ENCODE measurements at regions of chr2 and their contacts with region 1.

Region 1: DNA sequence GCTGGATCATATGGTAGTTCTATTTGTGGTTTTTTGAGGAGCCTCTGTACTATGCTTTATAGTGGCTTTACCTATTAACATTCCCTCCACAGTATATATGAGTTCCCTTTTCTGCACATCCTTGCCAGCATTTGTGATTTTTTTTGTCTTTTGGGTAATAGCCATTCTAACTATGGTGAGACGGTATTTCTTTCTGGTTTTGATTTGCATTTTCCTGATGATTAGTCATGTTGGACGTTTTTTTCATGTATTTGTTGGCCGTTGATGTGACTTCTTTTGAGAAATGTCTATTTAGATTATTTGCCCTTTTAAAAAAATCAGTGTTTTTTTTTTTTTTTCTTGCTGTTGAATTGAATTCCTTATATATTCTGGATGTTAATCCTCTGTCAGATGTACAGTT is 31.1 kb downstream of the ACTR3 start:
- DNase-seq: no peak
- ATAC-seq: no peak
- H3K4me3 ChIP-seq: no peak overlapping the region
- H3K27ac ChIP-seq: no peak overlapping the region
- H3K4me1 ChIP-seq: no peaks in the 10 kb centered on the region
- H3K27me3 ChIP-seq: no peaks in the 10 kb centered on the region
- CTCF ChIP-seq: no peak
- EP300 ChIP-seq: no peak
- POLR2A ChIP-seq: no peak
- RAD21 ChIP-seq: no peak

Region 2: GRCh38 chr2:113700186-113700841 is 220.7 kb before region 1 on chr2:
- CTCF ChIA-PET with region 1: no interaction called
- POLR2A ChIA-PET with region 1: no interaction called
- in situ Hi-C with region 1: no loop called
- intact Hi-C with region 1: no loop called
- DNase-seq: peak; percentile 46
- ATAC-seq: peak; percentile 83
- H3K4me3 ChIP-seq: no peak overlapping the region
- H3K27ac ChIP-seq: no peak overlapping the region
- H3K4me1 ChIP-seq: no peaks in the 10 kb centered on the region
- H3K27me3 ChIP-seq: no peaks in the 10 kb centered on the region
- CTCF ChIP-seq: peak; percentile 61
- EP300 ChIP-seq: no peak
- POLR2A ChIP-seq: no peak
- RAD21 ChIP-seq: 0 out of 2 replicates have a peak, but pooled peaks have one; percentile 47

Region 3: DNA sequence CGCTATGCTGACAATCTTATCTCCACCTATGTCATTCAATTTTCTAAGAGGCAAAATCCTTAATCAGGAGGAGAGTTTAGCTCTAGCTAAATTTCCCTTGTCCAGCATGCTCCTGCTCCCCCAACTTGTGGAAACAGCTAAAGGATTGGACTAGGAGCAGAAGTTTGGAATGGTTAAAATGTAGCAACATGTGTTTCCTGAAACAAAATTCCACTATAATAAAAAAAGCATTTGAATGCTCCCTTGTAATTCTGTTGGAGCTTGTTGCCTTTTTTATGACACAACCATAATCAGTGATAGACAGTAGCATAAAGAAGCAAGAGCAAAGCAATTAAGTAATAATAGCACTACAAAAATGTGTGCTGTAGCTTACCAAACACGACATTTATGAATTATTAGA is 24.2 kb before region 1 on chr2:
- CTCF ChIA-PET with region 1: no interaction called
- POLR2A ChIA-PET with region 1: no interaction called
- in situ Hi-C with region 1: no loop called
- intact Hi-C with region 1: loop called (anchors 2 kb)
- DNase-seq: no peak
- ATAC-seq: no peak
- H3K4me3 ChIP-seq: no peak overlapping the region
- H3K27ac ChIP-seq: no peak overlapping the region
- H3K4me1 ChIP-seq: peaks cover 97% of the 10 kb centered on the region
- H3K27me3 ChIP-seq: no peaks in the 10 kb centered on the region
- CTCF ChIP-seq: no peak
- EP300 ChIP-seq: no peak
- POLR2A ChIP-seq: no peak
- RAD21 ChIP-seq: no peak

Region 4: DNA sequence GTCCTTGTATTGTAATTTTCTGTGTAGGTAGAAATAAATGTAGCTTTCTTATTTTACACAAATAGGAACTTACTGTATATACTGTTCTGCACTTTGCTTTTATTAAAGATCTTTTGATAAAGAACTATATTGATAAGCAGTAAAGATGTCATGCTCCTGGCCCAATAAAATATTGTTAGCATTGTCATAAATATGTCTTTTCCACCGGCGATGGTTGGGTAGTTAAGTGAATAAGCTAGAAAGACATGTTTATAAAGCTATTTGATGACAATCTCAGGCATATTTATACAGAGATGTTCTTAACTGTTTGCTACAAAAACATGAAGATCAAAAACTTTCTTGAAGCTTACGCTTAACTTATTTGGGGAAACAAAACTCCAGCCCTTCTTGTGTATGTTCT is 38.2 kb after region 1 on chr2:
- CTCF ChIA-PET with region 1: no interaction called
- POLR2A ChIA-PET with region 1: no interaction called
- in situ Hi-C with region 1: no loop called
- intact Hi-C with region 1: no loop called
- DNase-seq: no peak
- ATAC-seq: no peak
- H3K4me3 ChIP-seq: no peak overlapping the region
- H3K27ac ChIP-seq: no peak overlapping the region
- H3K4me1 ChIP-seq: peaks cover 7% of the 10 kb centered on the region; the same call in 1 of the 2 replicates
- H3K27me3 ChIP-seq: no peaks in the 10 kb centered on the region
- CTCF ChIP-seq: no peak
- EP300 ChIP-seq: no peak
- POLR2A ChIP-seq: no peak
- RAD21 ChIP-seq: no peak

Region 5: DNA sequence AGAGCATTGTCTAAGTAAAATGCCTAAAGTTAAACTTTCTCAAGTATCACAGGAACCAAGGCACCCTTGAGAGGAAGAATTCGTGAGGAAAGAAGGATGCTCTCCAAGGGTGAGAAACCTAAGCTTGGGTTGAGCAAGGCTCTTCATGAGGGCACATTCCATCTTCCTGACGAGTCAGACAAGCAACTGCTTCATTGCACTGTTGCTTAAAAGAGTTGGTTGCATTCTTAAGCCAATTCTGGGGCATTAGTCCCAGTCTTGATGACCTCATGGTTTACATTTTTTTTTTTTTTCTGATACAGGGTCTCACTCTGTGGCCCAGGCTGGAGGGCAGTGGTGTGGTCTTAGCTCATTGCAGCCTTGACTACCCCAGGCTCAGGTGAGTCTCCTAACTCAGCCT is 206.4 kb after region 1 on chr2:
- CTCF ChIA-PET with region 1: no interaction called
- POLR2A ChIA-PET with region 1: no interaction called
- in situ Hi-C with region 1: no loop called
- intact Hi-C with region 1: no loop called
- DNase-seq: no peak
- ATAC-seq: no peak
- H3K4me3 ChIP-seq: no peak overlapping the region
- H3K27ac ChIP-seq: no peak overlapping the region
- H3K4me1 ChIP-seq: no peaks in the 10 kb centered on the region
- H3K27me3 ChIP-seq: peaks cover 0 to 6% of the 10 kb centered on the region in 2 experiments; a peak in 1 of 5 replicates
- CTCF ChIP-seq: no peak
- EP300 ChIP-seq: no peak
- POLR2A ChIP-seq: no peak
- RAD21 ChIP-seq: no peak

Measured in HepG2 (cell line).